ENCODE measurements at regions of chr11 and their contacts with region 1.

Region 1: DNA sequence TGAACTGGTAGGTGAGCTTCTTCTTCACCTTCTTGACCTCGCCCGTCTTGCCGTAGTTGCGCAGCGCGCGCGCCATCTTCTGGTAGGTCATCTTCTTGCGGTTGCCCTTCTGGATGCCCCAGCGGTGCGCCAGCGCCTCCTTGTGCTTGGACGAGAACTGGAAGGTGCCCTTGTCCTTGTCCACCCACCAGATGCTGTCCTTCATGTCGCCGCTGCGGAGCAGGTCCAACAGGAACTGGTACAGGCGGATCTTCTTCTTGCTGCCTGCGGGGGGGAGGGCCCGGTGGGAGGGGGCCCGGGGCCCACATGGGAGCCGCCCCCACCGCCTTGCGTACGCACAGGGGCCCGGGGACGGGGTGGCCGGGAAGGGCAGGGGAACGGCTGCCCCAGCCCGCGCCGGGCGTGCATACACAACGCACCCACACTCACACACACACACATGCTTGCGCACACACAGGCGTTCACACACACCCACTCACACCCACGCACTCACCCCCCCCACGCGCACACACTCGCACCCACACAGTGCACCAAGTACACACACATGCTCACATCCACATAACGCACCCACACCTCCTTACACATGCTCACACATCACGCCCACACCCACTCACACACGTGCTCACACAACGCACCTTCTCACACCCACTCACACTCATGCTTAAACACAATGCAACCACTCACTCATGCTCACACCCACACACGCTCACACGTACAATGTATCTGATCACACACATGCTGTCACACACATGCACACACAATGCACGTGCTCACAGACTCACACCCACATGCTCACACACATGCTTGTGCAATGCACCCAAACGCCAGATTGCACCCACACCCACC is 3.0 kb upstream of the MYBPC3 start:
- DNase-seq: peak; percentile 88 to 99
- H3K4me3 ChIP-seq: peak overlapping the region; percentile 30; the same call in 1 of the 2 replicates
- H3K27ac ChIP-seq: no peak overlapping the region
- H3K4me1 ChIP-seq: no peaks in the 10 kb centered on the region
- H3K27me3 ChIP-seq: no peaks in the 10 kb centered on the region
- CTCF ChIP-seq: peak; percentile 98

Region 2: GRCh38 chr11:46380340-46381047 is 975.0 kb before region 1 on chr11:
- CTCF ChIA-PET with region 1: no interaction called
- POLR2A ChIA-PET with region 1: no interaction called
- intact Hi-C with region 1: loop called (anchors 5 kb)
- DNase-seq: peak; percentile 33 to 80
- H3K4me3 ChIP-seq: peak overlapping the region; percentile 73
- H3K27ac ChIP-seq: peak overlapping the region; percentile 5; the same call in 1 of the 2 replicates
- H3K4me1 ChIP-seq: peaks cover 21% of the 10 kb centered on the region
- H3K27me3 ChIP-seq: no peaks in the 10 kb centered on the region
- CTCF ChIP-seq: no peak

Region 3: GRCh38 chr11:46889689-46890475 is 465.6 kb before region 1 on chr11:
- CTCF ChIA-PET with region 1: no interaction called
- POLR2A ChIA-PET with region 1: no interaction called
- intact Hi-C with region 1: loop called (anchors 1 kb)
- DNase-seq: peak; percentile 53 to 66
- H3K4me3 ChIP-seq: no peak overlapping the region
- H3K27ac ChIP-seq: no peak overlapping the region
- H3K4me1 ChIP-seq: no peaks in the 10 kb centered on the region
- H3K27me3 ChIP-seq: no peaks in the 10 kb centered on the region
- CTCF ChIP-seq: peak; percentile 97

Region 4: GRCh38 chr11:47176328-47177228 is 178.9 kb before region 1 on chr11 and contains the start of gene ARFGAP2:
- CTCF ChIA-PET with region 1: interaction called, 6 read pairs
- POLR2A ChIA-PET with region 1: no interaction called
- intact Hi-C with region 1: loop called (anchors 1 kb)
- DNase-seq: peak; percentile 85 to 97
- H3K4me3 ChIP-seq: peak within 1 kb of the TSS; percentile 95
- H3K27ac ChIP-seq: peak within 1 kb of the TSS; percentile 77
- H3K4me1 ChIP-seq: peaks cover 12% of the 10 kb centered on the region
- H3K27me3 ChIP-seq: no peaks in the 10 kb centered on the region
- CTCF ChIP-seq: no peak
- total RNA-seq, gene ARFGAP2: 122 and 130 TPM in 2 replicates

Region 5: GRCh38 chr11:47407746-47408590 is 52.5 kb after region 1 on chr11 and contains the start of gene SLC39A13:
- CTCF ChIA-PET with region 1: no interaction called
- POLR2A ChIA-PET with region 1: interaction called, 3 read pairs
- intact Hi-C with region 1: loop called (anchors 1 kb)
- DNase-seq: peak; percentile 86 to 99
- H3K4me3 ChIP-seq: peak within 1 kb of the TSS; percentile 90
- H3K27ac ChIP-seq: peak within 1 kb of the TSS; percentile 79
- H3K4me1 ChIP-seq: peaks cover 28% of the 10 kb centered on the region
- H3K27me3 ChIP-seq: no peaks in the 10 kb centered on the region
- CTCF ChIP-seq: peak; percentile 81
- total RNA-seq, gene SLC39A13: 28.8 and 32.3 TPM in 2 replicates